ENCODE measurements at regions of chr7 and their contacts with region 1.

Region 1: GRCh38 chr7:76011442-76011861 is 17.1 kb upstream of the TMEM120A start:
- DNase-seq: no peak
- ATAC-seq: no peak
- H3K4me3 ChIP-seq: no peak overlapping the region
- H3K4me3 Mint-ChIP-seq: no peak overlapping the region
- H3K27ac ChIP-seq: no peak overlapping the region
- H3K27ac Mint-ChIP-seq: no peak overlapping the region
- H3K4me1 ChIP-seq: peaks cover 29% of the 10 kb centered on the region
- H3K4me1 Mint-ChIP-seq: peaks cover 34% of the 10 kb centered on the region
- H3K27me3 ChIP-seq: no peaks in the 10 kb centered on the region
- H3K27me3 Mint-ChIP-seq: no peaks in the 10 kb centered on the region
- CTCF ChIP-seq: no peak

Region 2: DNA sequence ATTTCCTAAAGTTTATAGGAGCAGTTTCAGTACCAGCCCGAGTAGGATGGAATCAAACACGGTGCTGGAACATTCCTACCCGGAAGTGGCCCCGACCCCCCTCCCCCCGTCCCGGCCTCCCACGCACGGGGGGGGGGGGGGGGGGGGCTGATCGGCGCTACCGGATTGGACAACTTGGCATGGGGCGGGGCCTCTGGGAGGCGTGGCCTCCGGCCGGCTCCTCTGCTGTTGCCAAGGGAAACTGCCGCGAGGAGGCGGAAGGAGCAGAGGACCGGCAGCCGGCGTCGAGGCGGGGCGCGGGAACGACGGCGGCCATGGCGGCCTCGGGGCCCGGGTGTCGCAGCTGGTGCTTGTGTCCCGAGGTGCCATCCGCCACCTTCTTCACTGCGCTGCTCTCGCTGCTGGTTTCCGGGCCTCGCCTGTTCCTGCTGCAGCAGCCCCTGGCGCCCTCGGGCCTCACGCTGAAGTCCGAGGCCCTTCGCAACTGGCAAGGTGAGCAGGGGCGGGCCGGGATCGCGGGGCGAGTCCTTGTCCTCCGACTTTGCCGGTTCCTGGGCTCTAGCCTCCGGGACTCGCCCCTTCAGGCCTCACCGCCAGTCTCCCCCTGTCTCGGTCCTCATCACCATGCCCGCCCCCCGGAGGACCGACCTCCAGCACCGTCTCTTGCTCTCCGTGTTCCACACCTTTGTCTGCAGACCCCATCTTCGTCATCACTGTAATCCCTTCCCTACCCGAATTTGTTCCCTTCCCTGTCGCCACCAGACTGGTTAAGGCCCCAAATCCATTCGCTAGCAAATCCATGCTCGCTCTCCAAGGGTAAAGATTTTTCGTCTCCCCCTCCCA is 132.5 kb before region 1 on chr7 and contains the start of gene RHBDD2:
- CTCF ChIA-PET with region 1: no interaction called
- POLR2A ChIA-PET with region 1: interaction called, 5 read pairs
- intact Hi-C with region 1: loop called in 1 of 2 experiments (anchors 5 kb)
- DNase-seq: peak; percentile 95 to 99 (median 97)
- ATAC-seq: peak; percentile 87
- H3K4me3 ChIP-seq: peak within 1 kb of the TSS; percentile 96
- H3K4me3 Mint-ChIP-seq: peak within 1 kb of the TSS; percentile 92
- H3K27ac ChIP-seq: peak within 1 kb of the TSS; percentile 85 to 90
- H3K27ac Mint-ChIP-seq: peak within 1 kb of the TSS; percentile 90
- H3K4me1 ChIP-seq: peaks cover 31% of the 10 kb centered on the region
- H3K4me1 Mint-ChIP-seq: peaks cover 24% of the 10 kb centered on the region
- H3K27me3 ChIP-seq: no peaks in the 10 kb centered on the region
- H3K27me3 Mint-ChIP-seq: no peaks in the 10 kb centered on the region
- CTCF ChIP-seq: no peak
- total RNA-seq, gene RHBDD2: 199 to 208 TPM

Region 3: GRCh38 chr7:76359111-76359978 is 347.9 kb after region 1 on chr7:
- CTCF ChIA-PET with region 1: no interaction called
- POLR2A ChIA-PET with region 1: no interaction called
- intact Hi-C with region 1: no loop called
- DNase-seq: peak; percentile 88 to 99 (median 94)
- ATAC-seq: peak; percentile 90
- H3K4me3 ChIP-seq: peak overlapping the region; percentile 97
- H3K4me3 Mint-ChIP-seq: peak overlapping the region; percentile 96
- H3K27ac ChIP-seq: peak overlapping the region; percentile 93 to 96
- H3K27ac Mint-ChIP-seq: peak overlapping the region; percentile 90
- H3K4me1 ChIP-seq: peaks cover 29% of the 10 kb centered on the region
- H3K4me1 Mint-ChIP-seq: peaks cover 42% of the 10 kb centered on the region
- H3K27me3 ChIP-seq: no peaks in the 10 kb centered on the region
- H3K27me3 Mint-ChIP-seq: no peaks in the 10 kb centered on the region
- CTCF ChIP-seq: peak; percentile 70